ENCODE measurements at regions of chr6 and their contacts with region 1.

Region 1: DNA sequence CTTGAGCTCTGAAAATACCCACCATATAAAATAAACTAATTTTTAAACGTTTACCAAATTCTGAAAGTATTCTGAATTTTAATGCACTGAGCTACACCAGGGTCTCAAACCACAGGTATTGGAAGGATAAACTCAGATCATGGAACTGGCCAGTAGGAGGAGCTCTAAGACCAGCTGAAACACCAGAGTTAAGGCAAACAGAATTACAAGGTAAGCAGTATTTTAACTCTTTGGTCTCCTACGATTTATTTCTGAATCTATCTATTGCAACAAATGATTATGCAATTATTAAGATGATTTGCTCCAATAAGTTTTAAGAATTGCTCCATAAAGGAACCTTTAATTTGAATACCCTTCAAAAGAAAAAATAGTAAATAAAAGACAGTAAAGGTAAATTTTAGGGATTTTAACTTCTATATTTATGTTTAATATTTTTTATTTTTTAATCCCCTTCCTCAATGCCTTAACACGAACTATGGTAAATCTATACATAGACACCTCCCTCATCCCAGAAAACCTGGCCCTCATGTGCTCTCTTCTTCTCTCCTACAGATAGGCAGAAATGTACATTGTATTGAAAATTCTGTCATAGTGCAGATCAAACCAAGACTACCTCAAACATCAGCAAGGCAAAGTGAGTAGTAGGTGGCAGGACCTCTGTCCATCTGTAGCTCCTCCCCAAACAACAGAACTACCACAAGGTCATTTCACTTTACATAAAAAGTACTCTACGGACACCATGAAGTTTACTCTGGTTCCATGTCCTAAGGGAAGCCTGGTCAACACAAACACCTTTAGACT is 58.4 kb downstream of the SMLR1 start:
- DNase-seq: peak; percentile 32 to 77 (median 62)
- H3K4me3 ChIP-seq: no peak overlapping the region
- H3K4me3 Mint-ChIP-seq: no peak overlapping the region
- H3K27ac ChIP-seq: no peak overlapping the region
- H3K27ac Mint-ChIP-seq: no peak overlapping the region
- H3K4me1 ChIP-seq: no peaks in the 10 kb centered on the region
- H3K4me1 Mint-ChIP-seq: no peaks in the 10 kb centered on the region
- H3K27me3 ChIP-seq: no peaks in the 10 kb centered on the region
- H3K27me3 Mint-ChIP-seq: no peaks in the 10 kb centered on the region

Region 2: GRCh38 chr6:130836055-130836640 is 49.4 kb before region 1 on chr6:
- CTCF ChIA-PET with region 1: no interaction called
- POLR2A ChIA-PET with region 1: no interaction called
- DNase-seq: no peak
- H3K4me3 ChIP-seq: no peak overlapping the region
- H3K4me3 Mint-ChIP-seq: no peak overlapping the region
- H3K27ac ChIP-seq: no peak overlapping the region
- H3K27ac Mint-ChIP-seq: no peak overlapping the region
- H3K4me1 ChIP-seq: no peaks in the 10 kb centered on the region
- H3K4me1 Mint-ChIP-seq: no peaks in the 10 kb centered on the region
- H3K27me3 ChIP-seq: no peaks in the 10 kb centered on the region
- H3K27me3 Mint-ChIP-seq: no peaks in the 10 kb centered on the region

Region 3: GRCh38 chr6:131116749-131117360 is 231.3 kb after region 1 on chr6:
- CTCF ChIA-PET with region 1: interaction called, 83 read pairs
- POLR2A ChIA-PET with region 1: no interaction called
- DNase-seq: peak in 2 of 5 donors; percentile 11 to 37
- H3K4me3 ChIP-seq: no peak overlapping the region
- H3K4me3 Mint-ChIP-seq: no peak overlapping the region
- H3K27ac ChIP-seq: no peak overlapping the region
- H3K27ac Mint-ChIP-seq: no peak overlapping the region
- H3K4me1 ChIP-seq: no peaks in the 10 kb centered on the region
- H3K4me1 Mint-ChIP-seq: peaks cover 0 to 4% (median 0%) of the 10 kb centered on the region in 3 donors
- H3K27me3 ChIP-seq: no peaks in the 10 kb centered on the region
- H3K27me3 Mint-ChIP-seq: peaks cover 5 to 8% of the 10 kb centered on the region in 2 donors

Region 4: DNA sequence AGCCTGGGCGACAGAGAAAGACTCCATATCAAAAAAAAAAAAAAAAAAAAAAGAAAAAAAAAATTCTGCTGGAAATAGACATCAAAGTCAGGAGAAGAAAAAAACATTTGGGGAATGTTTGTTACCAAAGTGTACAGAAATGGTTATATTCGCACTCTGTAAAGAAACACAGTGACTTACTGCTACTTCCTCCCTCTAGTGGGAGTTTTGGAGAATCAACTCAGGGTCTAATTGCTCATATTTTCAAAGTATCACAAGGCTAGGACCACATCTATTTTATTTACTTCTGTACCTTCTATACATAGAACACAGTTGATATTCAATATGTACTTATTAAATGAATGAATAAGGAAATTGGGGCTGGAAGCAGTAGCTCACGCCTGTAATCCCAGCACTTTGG is 711.9 kb after region 1 on chr6:
- CTCF ChIA-PET with region 1: interaction called, 11 read pairs
- POLR2A ChIA-PET with region 1: no interaction called
- DNase-seq: peak in 1 of 5 donors; percentile 4
- H3K4me3 ChIP-seq: no peak overlapping the region
- H3K4me3 Mint-ChIP-seq: no peak overlapping the region
- H3K27ac ChIP-seq: no peak overlapping the region
- H3K27ac Mint-ChIP-seq: no peak overlapping the region
- H3K4me1 ChIP-seq: no peaks in the 10 kb centered on the region
- H3K4me1 Mint-ChIP-seq: no peaks in the 10 kb centered on the region
- H3K27me3 ChIP-seq: no peaks in the 10 kb centered on the region
- H3K27me3 Mint-ChIP-seq: no peaks in the 10 kb centered on the region